ENCODE measurements at regions of chr3 and their contacts with region 1.

Region 1: GRCh38 chr3:32467333-32468070 is 35.1 kb downstream of the CMTM6 start:
- DNase-seq: peak; percentile 84
- ATAC-seq: peak; percentile 77
- H3K4me3 Mint-ChIP-seq: no peak overlapping the region
- H3K27ac Mint-ChIP-seq: no peak overlapping the region
- H3K4me1 Mint-ChIP-seq: peaks cover 45% of the 10 kb centered on the region
- H3K27me3 Mint-ChIP-seq: no peaks in the 10 kb centered on the region

Region 2: DNA sequence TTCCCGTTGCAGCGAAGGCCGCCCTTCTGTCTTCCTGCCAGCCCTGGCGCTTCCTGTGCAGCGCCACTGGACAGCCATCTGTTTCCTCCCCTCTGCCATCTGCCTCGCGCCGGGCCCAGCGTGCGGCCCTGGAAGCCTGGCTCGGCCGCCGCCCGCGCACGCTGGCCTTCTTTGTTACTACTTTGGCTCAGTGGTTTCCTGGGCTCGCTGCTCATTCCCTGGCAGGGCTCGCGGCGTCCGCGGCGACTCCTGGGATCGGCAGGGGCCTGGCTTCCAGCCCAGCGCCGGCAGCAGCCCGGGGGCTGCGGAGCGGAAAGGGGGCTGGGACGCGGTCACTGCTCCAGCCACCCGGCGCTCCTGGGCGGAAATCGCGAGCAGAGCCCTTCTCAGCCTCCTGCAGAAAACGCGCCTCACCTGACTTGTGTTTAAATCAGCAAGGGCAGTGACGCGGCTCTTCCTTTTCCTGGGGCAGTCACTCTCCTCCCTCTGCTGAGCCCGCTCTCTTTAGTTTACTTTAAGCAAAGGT is 65.9 kb before region 1 on chr3:
- CTCF ChIA-PET with region 1: interaction called, 14 read pairs
- POLR2A ChIA-PET with region 1: interaction called, 3 read pairs
- intact Hi-C with region 1: loop called in 1 of 2 experiments (anchors 1 kb)
- DNase-seq: peak; percentile 79
- ATAC-seq: peak; percentile 78
- H3K4me3 Mint-ChIP-seq: peak overlapping the region; percentile 90
- H3K27ac Mint-ChIP-seq: peak overlapping the region; percentile 100
- H3K4me1 Mint-ChIP-seq: peaks cover 71% of the 10 kb centered on the region
- H3K27me3 Mint-ChIP-seq: no peaks in the 10 kb centered on the region

Region 3: GRCh38 chr3:32414520-32415202 is 52.8 kb before region 1 on chr3:
- CTCF ChIA-PET with region 1: interaction called, 20 read pairs
- POLR2A ChIA-PET with region 1: interaction called, 5 read pairs
- intact Hi-C with region 1: no loop called
- DNase-seq: peak; percentile 70
- ATAC-seq: peak; percentile 94
- H3K4me3 Mint-ChIP-seq: peak overlapping the region; percentile 28
- H3K27ac Mint-ChIP-seq: peak overlapping the region; percentile 92
- H3K4me1 Mint-ChIP-seq: peaks cover 74% of the 10 kb centered on the region
- H3K27me3 Mint-ChIP-seq: no peaks in the 10 kb centered on the region

Region 4: GRCh38 chr3:32438596-32439344 is 28.7 kb before region 1 on chr3:
- CTCF ChIA-PET with region 1: interaction called, 22 read pairs
- POLR2A ChIA-PET with region 1: no interaction called
- intact Hi-C with region 1: loop called in 1 of 2 experiments (anchors 2 kb)
- DNase-seq: peak; percentile 61
- ATAC-seq: peak; percentile 83
- H3K4me3 Mint-ChIP-seq: peak overlapping the region; percentile 1
- H3K27ac Mint-ChIP-seq: peak overlapping the region; percentile 89
- H3K4me1 Mint-ChIP-seq: peaks cover 86% of the 10 kb centered on the region
- H3K27me3 Mint-ChIP-seq: no peaks in the 10 kb centered on the region

Region 5: DNA sequence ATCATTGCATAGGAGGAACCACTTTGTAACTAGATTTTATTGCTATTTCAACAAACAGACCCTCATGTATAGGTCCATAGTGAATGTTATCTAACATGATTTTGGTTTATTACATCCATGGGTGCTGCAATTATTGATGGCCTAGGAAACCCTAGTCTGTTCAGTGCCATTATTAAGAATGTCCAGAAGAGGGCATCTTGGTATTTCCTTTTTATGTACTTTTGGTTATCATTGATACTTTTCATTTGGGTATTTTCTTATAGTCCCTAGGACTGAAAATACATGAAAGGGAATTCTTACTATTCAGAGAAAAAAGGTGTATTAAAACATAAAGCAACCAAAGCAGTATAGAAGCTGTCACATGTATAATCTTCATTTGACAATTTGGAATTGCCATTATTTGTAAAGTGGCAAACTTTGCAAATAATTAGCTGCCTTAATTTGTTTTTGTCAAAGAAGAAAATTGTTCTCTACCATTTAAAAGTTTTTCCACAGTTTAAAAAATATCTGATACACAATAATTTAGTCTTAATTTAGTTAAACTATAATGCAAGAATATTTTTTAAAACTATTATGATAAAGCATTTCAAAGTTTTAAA is 266.2 kb after region 1 on chr3:
- CTCF ChIA-PET with region 1: no interaction called
- POLR2A ChIA-PET with region 1: no interaction called
- intact Hi-C with region 1: no loop called
- DNase-seq: no peak
- ATAC-seq: no peak
- H3K4me3 Mint-ChIP-seq: no peak overlapping the region
- H3K27ac Mint-ChIP-seq: no peak overlapping the region
- H3K4me1 Mint-ChIP-seq: no peaks in the 10 kb centered on the region
- H3K27me3 Mint-ChIP-seq: no peaks in the 10 kb centered on the region

Measured in activated CD4-positive, alpha-beta T cell treated with anti-CD3 and anti-CD28 coated beads for 36 hours (primary cell).